ENCODE measurements at regions of chr22 and their contacts with region 1.

Region 1: GRCh38 chr22:41448189-41448808 is 1.7 kb upstream of the TOB2 start:
- DNase-seq: peak; percentile 95
- ATAC-seq: peak; percentile 73
- H3K4me3 Mint-ChIP-seq: peak overlapping the region; percentile 86
- H3K27ac Mint-ChIP-seq: peak overlapping the region; percentile 97
- H3K4me1 Mint-ChIP-seq: peaks cover 8% of the 10 kb centered on the region
- H3K27me3 Mint-ChIP-seq: no peaks in the 10 kb centered on the region

Region 2: GRCh38 chr22:41204992-41205900 is 243.1 kb before region 1 on chr22 and contains the start of gene L3MBTL2:
- CTCF ChIA-PET with region 1: no interaction called
- POLR2A ChIA-PET with region 1: no interaction called
- intact Hi-C with region 1: loop called in 1 of 2 experiments (anchors 1 kb)
- DNase-seq: peak; percentile 100
- ATAC-seq: peak; percentile 100
- H3K4me3 Mint-ChIP-seq: peak within 1 kb of the TSS; percentile 86
- H3K27ac Mint-ChIP-seq: peak within 1 kb of the TSS; percentile 89
- H3K4me1 Mint-ChIP-seq: peaks cover 20% of the 10 kb centered on the region
- H3K27me3 Mint-ChIP-seq: peaks cover 10% of the 10 kb centered on the region
- total RNA-seq, gene L3MBTL2: 24.4 to 25.1 TPM

Region 3: GRCh38 chr22:41403532-41404318 is 44.6 kb before region 1 on chr22:
- CTCF ChIA-PET with region 1: interaction called, 17 read pairs
- POLR2A ChIA-PET with region 1: interaction called, 5 read pairs
- intact Hi-C with region 1: loop called (anchors 1 to 2 kb)
- DNase-seq: peak; percentile 93
- ATAC-seq: peak; percentile 99
- H3K4me3 Mint-ChIP-seq: no peak overlapping the region
- H3K27ac Mint-ChIP-seq: no peak overlapping the region
- H3K4me1 Mint-ChIP-seq: peaks cover 17% of the 10 kb centered on the region
- H3K27me3 Mint-ChIP-seq: no peaks in the 10 kb centered on the region

Region 4: DNA sequence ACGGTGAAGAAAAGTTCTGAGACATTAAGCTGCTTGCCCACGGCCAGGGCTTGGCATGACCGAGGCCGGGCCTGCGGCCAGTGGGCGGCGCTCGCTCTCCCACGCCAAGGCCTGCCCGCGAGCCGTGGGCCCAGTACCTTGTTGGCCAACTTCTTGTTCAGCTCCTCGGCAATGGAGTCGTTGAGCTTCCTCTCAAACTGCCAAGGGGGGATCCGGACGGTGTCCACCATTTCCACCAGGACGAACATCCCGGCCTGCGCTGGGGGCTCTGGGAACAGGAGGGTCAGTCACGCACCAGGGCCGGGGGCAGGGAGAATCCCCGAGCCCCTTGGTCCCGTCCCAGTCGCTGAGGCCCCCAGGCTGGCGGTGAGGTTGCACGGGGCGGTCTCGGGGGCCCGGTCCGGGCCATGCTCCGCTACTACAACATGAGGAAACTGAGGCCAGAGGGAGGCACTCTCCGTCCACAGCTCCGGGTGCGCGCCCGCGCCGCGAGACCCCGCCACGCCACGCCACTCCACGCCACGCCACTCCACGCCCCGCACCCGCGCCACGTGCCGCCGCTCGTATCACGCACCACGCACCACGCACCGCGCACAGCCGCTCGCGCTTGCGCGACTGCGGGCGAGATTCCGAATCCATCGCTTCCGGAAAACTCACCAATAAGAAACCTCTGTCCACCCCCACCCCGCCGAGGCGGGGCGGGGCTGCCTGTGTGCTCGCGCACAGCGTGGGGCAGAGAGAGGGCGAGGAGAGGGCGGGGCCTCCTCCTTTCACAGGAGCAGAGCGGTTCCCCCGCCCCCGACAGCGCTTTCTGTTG is 95.8 kb after region 1 on chr22 and contains the start of gene POLR3H:
- CTCF ChIA-PET with region 1: no interaction called
- POLR2A ChIA-PET with region 1: no interaction called
- intact Hi-C with region 1: loop called in 1 of 2 experiments (anchors 1 kb)
- DNase-seq: peak; percentile 99
- ATAC-seq: peak; percentile 99
- H3K4me3 Mint-ChIP-seq: peak within 1 kb of the TSS; percentile 81
- H3K27ac Mint-ChIP-seq: peak within 1 kb of the TSS; percentile 90
- H3K4me1 Mint-ChIP-seq: peaks cover 40% of the 10 kb centered on the region
- H3K27me3 Mint-ChIP-seq: no peaks in the 10 kb centered on the region
- total RNA-seq, gene POLR3H: 18.3 to 24.6 TPM

Region 5: DNA sequence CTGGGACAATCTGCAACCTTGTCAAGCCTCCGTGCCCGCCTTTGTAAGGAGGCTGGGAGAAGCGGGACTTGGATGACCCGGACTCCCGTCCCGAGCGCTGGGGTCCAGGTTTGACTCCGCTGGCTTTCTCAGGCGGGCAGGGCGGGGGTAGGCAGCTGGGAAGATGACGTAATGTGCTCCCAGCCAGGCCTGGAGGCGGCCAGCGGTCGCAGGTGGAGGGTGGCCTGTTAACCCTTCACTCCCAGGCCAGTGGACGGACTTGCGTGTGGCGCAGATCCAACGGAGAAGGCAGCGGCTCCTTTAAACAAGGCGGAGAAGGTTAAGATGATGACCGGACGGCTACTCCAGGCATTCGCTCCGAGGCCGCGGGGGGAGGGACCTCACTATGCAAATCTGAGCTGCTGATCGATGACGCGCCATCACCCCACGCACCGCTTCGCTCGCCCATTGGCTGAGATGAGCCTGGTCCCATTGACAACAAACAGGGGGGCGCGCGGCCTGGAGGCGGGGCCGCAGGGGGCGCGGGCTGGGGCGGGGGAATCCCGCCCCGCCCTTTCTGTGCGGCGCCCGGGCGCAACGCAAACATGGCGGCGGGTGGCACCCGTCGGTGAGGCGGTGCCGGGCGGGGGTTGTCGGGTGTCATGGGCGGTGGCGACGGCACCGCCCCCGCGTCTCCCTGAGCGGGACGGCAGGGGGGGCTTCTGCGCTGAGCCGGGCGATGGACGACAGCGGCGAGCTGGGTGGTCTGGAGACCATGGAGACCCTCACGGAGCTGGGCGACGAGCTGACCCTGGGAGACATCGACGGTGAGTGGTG is 384.5 kb after region 1 on chr22 and contains the start of gene SREBF2:
- CTCF ChIA-PET with region 1: no interaction called
- POLR2A ChIA-PET with region 1: no interaction called
- intact Hi-C with region 1: loop called in 1 of 2 experiments (anchors 10 kb)
- DNase-seq: peak; percentile 100
- ATAC-seq: peak; percentile 94
- H3K4me3 Mint-ChIP-seq: peak within 1 kb of the TSS; percentile 96
- H3K27ac Mint-ChIP-seq: peak within 1 kb of the TSS; percentile 99
- H3K4me1 Mint-ChIP-seq: peaks cover 45% of the 10 kb centered on the region
- H3K27me3 Mint-ChIP-seq: no peaks in the 10 kb centered on the region
- total RNA-seq, gene SREBF2: 101 to 105 TPM